Calu3 (cell line): ENCODE measurements at regions of chr11 and their contacts with region 1.

Region 1: GRCh38 chr11:71240865-71241691 is 11.3 kb downstream of the SHANK2 start:
- DNase-seq: peak; percentile 71
- H3K4me3 Mint-ChIP-seq: peak overlapping the region; percentile 55
- H3K27ac Mint-ChIP-seq: peak overlapping the region; percentile 36
- H3K4me1 Mint-ChIP-seq: peaks cover 32% of the 10 kb centered on the region
- H3K27me3 Mint-ChIP-seq: no peaks in the 10 kb centered on the region
- CTCF ChIP-seq: no peak

Region 2: DNA sequence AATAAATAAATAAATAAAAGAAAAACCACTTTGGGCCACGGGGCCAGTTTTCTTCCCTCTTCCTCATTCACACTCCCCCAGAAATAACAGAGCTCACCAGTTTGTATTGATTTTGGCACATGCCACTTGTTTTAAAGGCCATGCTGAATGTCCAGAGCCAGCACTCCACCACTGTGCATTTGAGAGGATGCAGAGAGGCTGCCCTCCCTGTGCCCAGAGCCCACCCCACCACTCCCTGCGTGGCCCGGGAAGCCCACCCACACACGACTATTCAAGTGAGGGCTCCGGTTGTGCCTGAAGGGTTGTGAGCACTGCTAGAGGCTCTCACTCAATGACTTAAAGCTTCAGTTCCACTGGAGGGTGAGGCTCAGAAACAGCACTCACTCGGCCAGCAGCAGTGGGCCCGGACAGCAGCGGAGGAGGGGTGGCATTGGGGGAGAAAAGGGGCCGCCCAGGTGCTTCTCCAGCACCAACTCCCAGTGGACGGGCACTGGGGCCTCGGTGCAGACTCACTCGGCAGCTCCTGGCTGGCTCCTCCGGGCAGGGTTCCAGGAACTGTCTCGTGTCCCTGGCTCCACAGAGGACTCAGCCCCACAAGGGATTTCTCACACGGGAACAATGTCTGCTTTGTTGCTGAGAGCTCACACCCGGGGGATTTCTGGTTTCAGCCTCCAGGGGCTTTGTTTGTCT is 101.4 kb before region 1 on chr11:
- CTCF ChIA-PET with region 1: no interaction called
- intact Hi-C with region 1: loop called (anchors 10 kb)
- DNase-seq: peak; percentile 45
- H3K4me3 Mint-ChIP-seq: no peak overlapping the region
- H3K27ac Mint-ChIP-seq: peak overlapping the region; percentile 60
- H3K4me1 Mint-ChIP-seq: peaks cover 21% of the 10 kb centered on the region
- H3K27me3 Mint-ChIP-seq: no peaks in the 10 kb centered on the region
- CTCF ChIP-seq: no peak